ENCODE measurements at regions of chr3 and their contacts with region 1.

Region 1: DNA sequence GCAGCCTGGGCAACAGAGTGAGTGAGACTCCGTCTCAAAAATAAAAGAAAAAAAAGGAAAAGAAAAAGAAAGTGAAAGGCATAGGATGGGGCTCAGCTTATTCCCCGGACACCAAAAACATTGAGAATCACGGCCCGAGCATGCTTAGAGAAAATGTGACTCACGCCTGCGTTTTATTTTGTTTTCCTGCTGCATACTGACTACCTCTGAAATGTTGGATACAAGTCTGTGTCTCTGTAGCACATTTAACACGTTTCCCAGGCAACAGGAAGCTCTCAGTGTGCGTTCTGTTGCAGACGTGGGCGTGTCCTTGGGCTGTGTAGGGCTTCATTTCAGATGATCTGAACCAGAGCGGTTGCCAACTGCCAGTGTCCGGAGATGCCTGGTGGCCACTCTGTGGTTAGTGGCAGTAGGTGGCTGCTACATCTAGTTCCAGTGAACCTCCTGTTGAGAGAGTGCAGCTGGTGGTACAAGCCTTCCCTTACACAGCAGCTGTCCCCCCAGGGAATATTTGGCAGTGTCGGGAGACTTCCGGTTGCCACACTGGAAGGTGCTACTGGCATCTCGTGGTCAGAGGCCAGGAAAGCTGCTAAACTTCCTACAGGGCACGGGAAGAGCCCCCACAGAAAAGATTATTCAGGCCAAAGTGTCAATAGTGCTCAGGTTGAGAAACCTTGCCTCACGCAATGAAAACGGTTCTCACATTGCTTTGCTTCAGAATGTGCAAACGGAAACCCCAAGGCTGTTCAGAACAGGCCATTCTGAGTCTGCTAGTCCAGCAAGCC is 3.1 kb downstream of the SLC51A start:
- DNase-seq: peak; percentile 72
- CTCF ChIP-seq: no peak

Region 2: DNA sequence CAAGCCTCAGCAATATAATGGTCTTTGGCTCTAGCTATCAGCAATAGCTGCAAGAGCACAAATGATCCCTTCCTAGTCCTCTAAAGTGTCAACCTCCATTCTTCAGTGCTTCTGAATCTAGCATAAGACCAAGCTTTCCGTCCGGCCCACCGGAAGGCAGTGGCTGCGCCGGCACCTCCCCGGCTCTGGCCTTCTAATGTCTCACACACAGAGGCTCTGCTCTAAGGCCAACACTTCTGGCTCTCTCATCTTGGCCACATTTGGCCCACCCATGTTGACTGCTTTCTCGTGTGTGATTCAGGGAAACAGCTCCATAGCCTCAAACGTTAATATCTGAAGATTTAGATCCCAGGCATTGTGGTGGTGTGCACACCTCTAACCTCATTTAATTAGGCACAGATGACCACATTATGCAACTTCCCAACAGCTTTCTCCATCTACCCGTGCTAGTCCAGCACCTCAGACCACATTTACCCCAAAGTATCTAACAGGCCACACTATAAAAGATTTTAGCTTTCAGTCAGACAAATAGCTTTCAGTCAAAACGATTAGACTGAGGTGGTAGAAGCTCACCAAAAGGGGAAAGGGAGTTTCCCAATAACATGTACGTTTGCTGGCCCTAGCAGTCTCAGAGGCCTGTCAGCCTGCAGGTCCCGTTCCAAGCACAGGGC is 16.2 kb after region 1 on chr3:
- CTCF ChIA-PET with region 1: interaction called, 10 read pairs
- POLR2A ChIA-PET with region 1: interaction called, 3 read pairs
- DNase-seq: no peak
- CTCF ChIP-seq: no peak

Region 3: DNA sequence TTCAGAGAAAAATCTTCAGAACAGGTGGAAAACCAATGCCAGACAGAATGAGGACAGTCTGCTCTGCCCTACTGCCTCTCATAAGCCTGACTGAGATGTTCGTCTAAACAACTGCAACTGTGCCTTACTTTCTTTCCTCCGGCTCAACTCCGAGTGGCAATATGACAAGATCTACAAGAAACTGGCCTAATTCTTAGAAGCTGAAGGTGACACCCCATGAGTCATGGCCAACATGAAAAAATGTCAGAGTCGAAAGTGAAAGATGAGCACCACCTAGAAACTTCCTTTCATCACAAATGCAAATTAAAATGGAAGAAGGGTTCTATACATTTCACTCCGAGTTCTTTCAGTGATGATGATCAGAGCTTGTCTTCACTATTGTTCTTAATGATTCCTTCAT is 55.2 kb after region 1 on chr3:
- CTCF ChIA-PET with region 1: no interaction called
- POLR2A ChIA-PET with region 1: no interaction called
- DNase-seq: peak; percentile 85
- CTCF ChIP-seq: no peak